Testis (tissue), 5 donors: ENCODE measurements at regions of chr4 and their contacts with region 1.

Region 1: DNA sequence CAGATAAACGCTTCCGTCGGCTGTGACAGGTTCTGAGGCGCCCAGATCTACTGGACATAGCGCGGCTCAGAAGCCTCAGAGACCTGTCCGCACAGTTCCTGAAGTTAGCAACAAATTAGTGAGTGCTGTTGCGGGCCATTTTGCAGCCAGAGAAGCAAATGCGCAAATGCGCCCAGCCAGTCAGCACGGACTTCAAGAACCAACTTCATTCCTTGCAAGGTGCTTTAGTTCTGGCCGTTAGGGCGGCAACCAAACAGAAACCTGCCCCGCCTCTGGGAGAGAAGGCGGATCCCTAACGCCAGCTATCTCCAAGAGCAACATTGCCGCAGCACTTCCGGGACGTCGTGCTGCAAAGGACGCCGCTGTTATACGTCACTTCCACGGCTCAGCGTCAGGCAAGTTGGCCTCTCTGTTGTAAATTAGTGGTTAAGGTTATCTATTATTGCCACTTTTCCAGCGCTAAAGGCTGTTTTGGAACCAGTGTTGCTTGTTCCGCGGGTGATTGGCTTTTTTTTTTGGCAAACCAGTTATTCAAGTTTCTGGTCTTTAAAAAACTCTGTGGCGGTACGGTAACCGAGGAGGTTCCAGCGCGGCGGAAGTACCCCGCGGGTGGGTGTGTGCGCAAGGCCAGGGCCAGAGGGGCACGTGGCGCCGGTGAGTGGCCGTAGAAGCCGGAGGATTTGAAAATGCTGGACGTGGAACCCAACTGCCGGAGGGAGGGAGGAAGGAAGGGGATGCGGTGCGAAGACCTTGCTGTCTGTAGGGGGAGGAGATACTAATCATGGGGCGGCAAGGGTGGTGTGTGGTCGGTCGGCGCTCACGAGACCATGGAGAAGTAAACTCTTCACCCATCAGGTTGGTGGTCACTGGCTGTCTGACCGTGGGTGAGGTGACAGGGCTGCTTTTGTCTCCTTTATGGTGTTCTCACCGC is at the start of gene GAR1:
- DNase-seq: peak; percentile 97
- H3K4me3 ChIP-seq: peak within 1 kb of the TSS; percentile 84 to 87
- H3K27ac ChIP-seq: peak within 1 kb of the TSS; percentile 89 to 92
- H3K4me1 ChIP-seq: peaks cover 8% of the 10 kb centered on the region
- H3K27me3 ChIP-seq: no peaks in the 10 kb centered on the region
- CTCF ChIP-seq: no peak
- POLR2A ChIP-seq: no peak
- total RNA-seq, gene GAR1: 14.5 to 17.8 TPM

Region 2: DNA sequence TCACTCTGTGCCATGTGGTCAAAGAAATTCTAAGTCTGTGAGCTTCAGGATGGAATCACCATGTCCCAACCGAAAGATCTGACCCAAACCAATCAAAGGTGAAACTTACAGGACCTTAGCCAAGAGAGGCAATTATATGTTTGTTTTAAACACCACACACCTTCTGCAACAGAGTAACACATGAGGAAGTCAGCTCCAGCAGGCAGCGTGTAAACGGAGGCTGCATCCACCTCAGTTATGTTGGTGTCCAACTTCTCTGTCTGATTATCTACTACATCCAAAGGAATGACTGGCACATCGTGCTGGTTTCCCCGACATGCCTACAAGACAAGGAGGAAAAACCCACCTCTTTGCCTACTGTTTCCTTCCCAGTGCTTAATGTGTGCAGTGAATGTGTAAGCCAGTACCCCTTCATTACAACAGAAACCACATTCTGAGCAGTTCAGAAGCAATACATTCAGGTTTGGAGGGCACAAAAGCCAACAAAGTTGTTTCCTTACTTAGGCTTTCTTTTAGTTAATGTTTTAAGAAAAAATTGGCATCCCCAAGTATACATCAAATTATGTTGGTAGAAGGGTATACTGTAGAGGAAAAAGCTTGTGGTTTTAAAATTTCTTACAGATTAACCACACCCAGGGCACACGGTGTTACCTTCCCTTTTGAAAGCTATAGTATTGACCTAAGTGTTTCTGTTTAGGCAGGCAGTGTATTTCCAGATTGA is 124.6 kb before region 1 on chr4:
- intact Hi-C with region 1: loop called (anchors 10 kb)
- DNase-seq: no peak
- H3K4me3 ChIP-seq: no peak overlapping the region
- H3K27ac ChIP-seq: no peak overlapping the region
- H3K4me1 ChIP-seq: no peaks in the 10 kb centered on the region
- H3K27me3 ChIP-seq: no peaks in the 10 kb centered on the region
- CTCF ChIP-seq: no peak
- POLR2A ChIP-seq: no peak